Activated CD8-positive, alpha-beta T cell treated with anti-CD3 and anti-CD28 coated beads for 36 hours (primary cell): ENCODE measurements at regions of chr17 and their contacts with region 1.

Region 1: GRCh38 chr17:62981928-62982327 is 15.9 kb downstream of the TANC2 start:
- DNase-seq: no peak
- ATAC-seq: no peak
- H3K4me3 Mint-ChIP-seq: no peak overlapping the region
- H3K27ac Mint-ChIP-seq: no peak overlapping the region
- H3K4me1 Mint-ChIP-seq: peaks cover 5% of the 10 kb centered on the region
- H3K27me3 Mint-ChIP-seq: no peaks in the 10 kb centered on the region
- CTCF ChIP-seq: no peak

Region 2: GRCh38 chr17:62995377-62995885 is 13.5 kb after region 1 on chr17:
- CTCF ChIA-PET with region 1: interaction called, 15 read pairs
- POLR2A ChIA-PET with region 1: no interaction called
- intact Hi-C with region 1: no loop called
- DNase-seq: peak; percentile 60
- ATAC-seq: peak; percentile 85
- H3K4me3 Mint-ChIP-seq: no peak overlapping the region
- H3K27ac Mint-ChIP-seq: no peak overlapping the region
- H3K4me1 Mint-ChIP-seq: peaks cover 19% of the 10 kb centered on the region
- H3K27me3 Mint-ChIP-seq: no peaks in the 10 kb centered on the region
- CTCF ChIP-seq: peak; percentile 73

Region 3: GRCh38 chr17:63006037-63006436 is 24.1 kb after region 1 on chr17:
- CTCF ChIA-PET with region 1: no interaction called
- POLR2A ChIA-PET with region 1: no interaction called
- intact Hi-C with region 1: no loop called
- DNase-seq: no peak
- ATAC-seq: no peak
- H3K4me3 Mint-ChIP-seq: no peak overlapping the region
- H3K27ac Mint-ChIP-seq: no peak overlapping the region
- H3K4me1 Mint-ChIP-seq: peaks cover 23% of the 10 kb centered on the region
- H3K27me3 Mint-ChIP-seq: no peaks in the 10 kb centered on the region
- CTCF ChIP-seq: no peak

Region 4: DNA sequence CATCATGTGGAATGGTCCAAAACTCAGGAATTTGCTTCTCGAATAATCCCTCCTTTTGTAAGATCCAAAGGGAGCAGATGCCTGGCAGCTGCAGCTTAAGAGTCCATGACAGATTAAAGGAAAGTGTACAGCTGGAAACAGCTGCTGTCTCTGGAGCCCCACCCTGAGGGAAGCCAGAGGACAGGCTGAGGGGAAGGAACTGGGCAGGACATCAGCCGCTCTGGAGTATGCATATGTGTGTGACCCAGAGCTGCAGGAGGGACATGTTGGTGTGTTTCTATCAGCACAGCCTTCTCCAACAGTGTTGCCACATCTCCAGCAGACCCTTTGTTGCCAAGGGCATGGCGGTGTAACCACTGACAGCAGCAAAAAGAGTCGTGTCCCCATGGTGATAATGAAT is 417.9 kb after region 1 on chr17:
- CTCF ChIA-PET with region 1: no interaction called
- POLR2A ChIA-PET with region 1: no interaction called
- intact Hi-C with region 1: no loop called
- DNase-seq: no peak
- ATAC-seq: no peak
- H3K4me3 Mint-ChIP-seq: no peak overlapping the region
- H3K27ac Mint-ChIP-seq: no peak overlapping the region
- H3K4me1 Mint-ChIP-seq: no peaks in the 10 kb centered on the region
- H3K27me3 Mint-ChIP-seq: no peaks in the 10 kb centered on the region
- CTCF ChIP-seq: no peak